ENCODE measurements at regions of chr10 and their contacts with region 1.

Region 1: DNA sequence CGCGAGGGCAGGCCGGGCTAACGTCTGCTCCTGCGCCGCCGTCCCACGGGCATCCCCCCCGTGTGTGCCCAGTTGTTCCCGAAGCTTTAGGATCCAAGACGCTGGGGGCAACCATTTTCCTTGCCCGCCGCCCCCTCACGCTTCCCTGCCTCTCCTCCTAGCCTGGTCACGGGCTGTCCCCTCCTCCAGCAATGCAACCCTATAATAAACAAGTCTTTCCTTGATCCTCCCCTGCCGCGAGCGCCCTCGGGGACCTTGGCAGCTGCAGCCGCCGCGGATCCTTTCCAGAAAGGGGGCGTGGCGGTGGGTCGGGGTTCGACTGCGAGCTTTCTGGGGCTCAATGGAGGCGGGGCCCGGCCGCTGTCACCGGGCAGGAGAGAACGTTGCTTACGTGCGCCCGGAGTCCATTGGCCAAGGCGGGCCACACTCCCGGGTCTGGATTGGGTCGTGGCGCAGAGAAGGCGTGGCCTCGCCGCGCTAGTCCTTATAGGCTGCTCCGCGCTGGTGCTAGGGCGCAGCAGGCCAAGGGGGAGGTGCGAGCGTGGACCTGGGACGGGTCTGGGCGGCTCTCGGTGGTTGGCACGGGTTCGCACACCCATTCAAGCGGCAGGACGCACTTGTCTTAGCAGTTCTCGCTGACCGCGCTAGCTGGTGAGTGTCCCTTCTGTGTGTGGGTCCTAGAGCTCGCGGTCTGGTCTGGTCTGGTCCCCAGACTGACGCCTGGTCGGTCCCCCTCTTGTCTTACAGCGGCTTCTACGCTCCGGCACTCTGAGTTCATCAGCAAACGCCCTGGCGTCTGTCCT is at the start of gene DDIT4:
- DNase-seq: peak; percentile 99
- H3K4me3 Mint-ChIP-seq: peak within 1 kb of the TSS; percentile 100
- H3K27ac Mint-ChIP-seq: peak within 1 kb of the TSS; percentile 96
- H3K4me1 Mint-ChIP-seq: peaks cover 58% of the 10 kb centered on the region
- H3K27me3 Mint-ChIP-seq: no peaks in the 10 kb centered on the region
- total RNA-seq, gene DDIT4: 475 to 481 TPM

Region 2: GRCh38 chr10:72175166-72175565 is 98.4 kb before region 1 on chr10:
- CTCF ChIA-PET with region 1: no interaction called
- POLR2A ChIA-PET with region 1: no interaction called
- DNase-seq: no peak
- H3K4me3 Mint-ChIP-seq: no peak overlapping the region
- H3K27ac Mint-ChIP-seq: no peak overlapping the region
- H3K4me1 Mint-ChIP-seq: peaks cover 12% of the 10 kb centered on the region
- H3K27me3 Mint-ChIP-seq: no peaks in the 10 kb centered on the region

Region 3: DNA sequence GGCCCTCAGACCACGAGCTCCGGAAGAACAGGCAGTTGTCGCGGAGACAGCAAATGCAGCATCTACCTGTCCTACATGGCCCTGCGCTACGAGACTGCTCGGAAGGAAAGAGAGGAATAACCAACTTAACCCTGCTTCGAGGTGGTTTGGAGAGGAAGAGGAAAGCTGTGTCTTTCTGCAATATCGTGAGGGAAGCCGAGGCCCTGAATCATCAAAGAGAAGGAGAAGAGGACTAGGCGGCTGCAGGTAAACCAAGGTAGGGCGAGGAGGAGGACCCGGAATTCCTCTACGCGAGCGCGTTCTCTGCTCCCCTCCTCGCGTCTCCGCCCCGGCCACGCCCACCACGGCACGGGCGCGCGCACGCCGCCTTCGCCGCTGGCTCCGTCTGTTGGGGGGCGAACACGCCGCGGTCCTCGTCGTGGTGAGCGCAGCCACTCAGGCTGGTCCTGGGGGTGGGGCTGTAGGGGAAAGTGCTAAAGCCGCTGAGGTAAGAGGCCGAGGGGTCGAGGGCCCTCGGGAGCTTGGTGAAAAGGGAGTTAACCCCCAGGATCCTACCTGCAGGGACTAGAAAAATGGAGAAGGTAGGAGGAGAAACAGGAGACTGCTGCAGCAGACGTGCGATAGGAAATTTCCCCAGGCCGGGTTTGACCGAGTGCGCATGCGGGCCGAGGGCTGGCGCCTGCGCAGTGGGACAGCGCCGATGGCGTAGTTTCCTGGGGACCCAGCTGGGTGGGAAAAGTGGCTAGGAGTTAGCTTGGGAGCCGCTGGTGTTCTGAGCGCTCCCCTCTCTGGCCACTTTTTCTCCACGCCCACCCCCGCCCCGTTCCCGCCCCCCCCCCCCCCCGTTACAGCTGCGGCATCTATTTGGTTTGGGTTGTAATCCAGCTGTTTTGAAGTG is 57.7 kb before region 1 on chr10 and contains the starts of genes ANAPC16 and ASCC1:
- CTCF ChIA-PET with region 1: interaction called, 5 read pairs
- POLR2A ChIA-PET with region 1: interaction called, 37 read pairs
- DNase-seq: peak; percentile 94
- H3K4me3 Mint-ChIP-seq: peak within 1 kb of the TSS; percentile 98
- H3K27ac Mint-ChIP-seq: peak within 1 kb of the TSS; percentile 99
- H3K4me1 Mint-ChIP-seq: peaks cover 61% of the 10 kb centered on the region
- H3K27me3 Mint-ChIP-seq: no peaks in the 10 kb centered on the region
- total RNA-seq, gene ANAPC16: 94.2 to 101 TPM
- total RNA-seq, gene ASCC1: 35.5 to 36.2 TPM

Region 4: DNA sequence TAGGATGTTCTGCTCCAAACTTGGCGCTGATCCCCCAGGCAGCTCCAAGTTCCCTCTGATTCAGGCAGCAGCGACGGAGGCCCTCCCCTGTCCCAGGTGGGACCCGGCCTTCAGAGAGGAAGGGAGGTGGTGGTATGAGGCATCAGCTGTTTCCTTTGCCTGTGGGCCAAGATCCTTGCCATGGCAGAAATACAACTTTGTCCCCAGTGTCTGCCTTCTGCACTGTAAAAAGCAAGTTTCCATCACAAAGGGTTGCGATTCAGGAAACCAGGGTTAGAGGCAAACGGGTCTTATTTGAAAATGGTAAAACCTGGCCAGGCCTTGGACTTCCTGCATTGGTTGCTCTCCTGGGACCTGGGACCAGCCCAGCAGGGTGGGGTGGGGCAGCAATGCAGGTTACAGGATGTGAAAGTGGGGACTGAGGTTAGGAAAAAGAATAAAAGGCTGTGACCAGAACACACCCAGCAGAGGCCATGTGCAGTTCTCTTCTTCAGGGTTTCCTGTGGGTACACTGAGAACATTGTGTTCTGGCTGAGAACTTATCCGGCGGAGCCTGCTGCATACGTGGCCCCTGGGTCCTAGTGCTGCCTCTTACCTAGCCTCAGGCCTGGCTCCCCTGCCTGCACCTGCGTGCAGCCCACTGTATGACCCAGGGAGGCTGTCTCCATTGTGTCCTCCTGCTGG is 25.0 kb before region 1 on chr10:
- CTCF ChIA-PET with region 1: interaction called, 33 read pairs
- POLR2A ChIA-PET with region 1: interaction called, 58 read pairs
- DNase-seq: peak; percentile 86
- H3K4me3 Mint-ChIP-seq: peak overlapping the region; percentile 73
- H3K27ac Mint-ChIP-seq: peak overlapping the region; percentile 96
- H3K4me1 Mint-ChIP-seq: peaks cover 78% of the 10 kb centered on the region
- H3K27me3 Mint-ChIP-seq: no peaks in the 10 kb centered on the region

Region 5: DNA sequence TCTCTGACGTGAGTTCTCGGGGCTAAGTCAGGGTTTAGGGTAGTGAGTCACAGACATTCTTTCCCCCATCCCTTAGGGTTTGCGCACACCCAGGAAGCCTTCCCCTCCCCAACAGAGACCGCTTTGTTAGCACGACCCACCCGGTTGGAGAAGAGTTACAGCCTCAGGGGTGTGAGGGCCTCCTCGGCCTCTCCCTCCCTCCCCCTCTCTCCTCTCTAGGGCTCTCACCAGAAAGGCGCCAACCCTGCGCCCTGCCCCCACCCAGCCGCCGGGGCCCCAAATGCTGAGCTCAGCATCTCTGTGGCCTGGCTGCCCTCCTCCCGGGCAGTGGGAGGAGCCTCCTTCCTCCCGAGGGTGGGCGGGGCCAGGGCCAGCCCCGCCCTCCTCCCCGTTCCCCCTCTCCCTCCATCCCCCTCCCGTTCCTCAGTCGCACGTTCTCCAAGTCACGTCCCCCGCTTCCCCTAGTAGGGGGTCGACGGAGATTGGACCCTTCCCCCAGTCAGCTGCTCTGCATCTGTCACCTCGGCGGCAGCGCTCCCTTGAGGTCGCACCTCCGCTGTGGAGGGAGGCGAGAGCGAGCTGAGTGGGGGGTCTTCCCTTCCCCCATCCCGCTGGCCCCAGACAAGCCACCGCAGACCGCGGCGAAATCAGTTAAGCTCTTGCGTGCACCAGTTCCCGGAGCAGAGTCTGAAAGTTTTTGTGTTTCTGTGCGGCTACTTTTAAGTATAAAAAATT is 12.9 kb before region 1 on chr10:
- CTCF ChIA-PET with region 1: interaction called, 33 read pairs
- POLR2A ChIA-PET with region 1: interaction called, 145 read pairs
- DNase-seq: peak; percentile 95
- H3K4me3 Mint-ChIP-seq: peak overlapping the region; percentile 79
- H3K27ac Mint-ChIP-seq: peak overlapping the region; percentile 98
- H3K4me1 Mint-ChIP-seq: peaks cover 65% of the 10 kb centered on the region
- H3K27me3 Mint-ChIP-seq: no peaks in the 10 kb centered on the region

Region 6: DNA sequence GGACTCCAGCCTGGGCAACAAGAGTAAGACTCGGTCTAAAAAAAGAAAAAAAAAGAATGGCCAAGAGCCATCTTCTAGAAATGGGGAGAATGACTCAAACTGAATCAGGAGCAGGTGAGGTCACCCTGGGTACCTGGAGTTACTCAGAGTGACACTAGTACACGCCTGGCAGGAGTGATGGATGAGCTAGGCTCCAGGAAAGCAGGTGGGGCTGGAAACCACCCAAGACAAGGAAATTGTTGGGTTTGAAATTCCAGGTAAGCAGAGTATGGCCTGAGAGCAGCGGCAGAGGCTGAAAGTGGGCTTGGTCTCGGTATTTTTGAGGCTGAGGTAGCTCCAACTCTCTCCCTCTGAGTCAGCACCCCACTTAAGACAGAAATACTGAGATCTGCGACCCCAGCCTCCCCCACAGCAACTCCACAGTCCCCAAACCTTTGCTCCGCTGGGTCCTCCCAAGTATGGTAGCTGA is 18.6 kb after region 1 on chr10:
- CTCF ChIA-PET with region 1: interaction called, 56 read pairs
- POLR2A ChIA-PET with region 1: interaction called, 79 read pairs
- DNase-seq: peak; percentile 60
- H3K4me3 Mint-ChIP-seq: peak overlapping the region; percentile 31
- H3K27ac Mint-ChIP-seq: peak overlapping the region; percentile 90
- H3K4me1 Mint-ChIP-seq: peaks cover 67% of the 10 kb centered on the region
- H3K27me3 Mint-ChIP-seq: no peaks in the 10 kb centered on the region

Region 7: DNA sequence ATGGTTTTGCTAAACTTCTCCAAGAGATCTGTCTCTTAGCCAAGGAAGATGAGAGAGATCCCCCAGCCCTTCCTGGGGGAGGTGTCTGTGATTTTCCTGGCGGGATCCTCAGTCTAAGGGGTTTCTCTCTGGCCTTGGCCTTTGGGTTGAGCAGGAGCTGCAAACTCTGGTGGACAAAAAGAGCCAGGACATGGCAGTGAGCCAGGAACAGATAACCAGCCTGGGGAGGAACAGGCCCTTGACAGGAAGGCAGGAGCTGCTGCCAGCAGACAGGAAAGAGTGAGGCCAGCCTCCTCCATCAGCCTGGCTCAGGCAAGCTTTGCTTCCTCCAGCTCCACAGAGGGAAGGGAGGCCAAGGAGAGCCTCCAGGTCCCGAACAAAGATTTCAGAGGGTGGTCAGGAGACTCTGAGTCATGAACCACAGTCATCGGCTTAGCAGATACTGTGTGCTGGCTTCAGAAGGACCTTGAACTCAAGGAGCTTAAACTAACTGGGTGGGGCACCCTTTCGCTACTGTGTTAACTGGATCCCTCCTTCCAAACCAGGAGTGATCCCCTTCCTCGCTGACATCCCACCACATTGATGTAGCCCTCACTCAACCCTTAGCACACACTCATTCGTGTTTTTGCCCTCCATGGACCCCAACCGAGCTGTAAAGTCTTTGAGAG is 34.8 kb after region 1 on chr10:
- CTCF ChIA-PET with region 1: interaction called, 7 read pairs
- POLR2A ChIA-PET with region 1: interaction called, 39 read pairs
- DNase-seq: peak; percentile 55
- H3K4me3 Mint-ChIP-seq: no peak overlapping the region
- H3K27ac Mint-ChIP-seq: peak overlapping the region; percentile 76
- H3K4me1 Mint-ChIP-seq: peaks cover 67% of the 10 kb centered on the region
- H3K27me3 Mint-ChIP-seq: no peaks in the 10 kb centered on the region

Region 8: DNA sequence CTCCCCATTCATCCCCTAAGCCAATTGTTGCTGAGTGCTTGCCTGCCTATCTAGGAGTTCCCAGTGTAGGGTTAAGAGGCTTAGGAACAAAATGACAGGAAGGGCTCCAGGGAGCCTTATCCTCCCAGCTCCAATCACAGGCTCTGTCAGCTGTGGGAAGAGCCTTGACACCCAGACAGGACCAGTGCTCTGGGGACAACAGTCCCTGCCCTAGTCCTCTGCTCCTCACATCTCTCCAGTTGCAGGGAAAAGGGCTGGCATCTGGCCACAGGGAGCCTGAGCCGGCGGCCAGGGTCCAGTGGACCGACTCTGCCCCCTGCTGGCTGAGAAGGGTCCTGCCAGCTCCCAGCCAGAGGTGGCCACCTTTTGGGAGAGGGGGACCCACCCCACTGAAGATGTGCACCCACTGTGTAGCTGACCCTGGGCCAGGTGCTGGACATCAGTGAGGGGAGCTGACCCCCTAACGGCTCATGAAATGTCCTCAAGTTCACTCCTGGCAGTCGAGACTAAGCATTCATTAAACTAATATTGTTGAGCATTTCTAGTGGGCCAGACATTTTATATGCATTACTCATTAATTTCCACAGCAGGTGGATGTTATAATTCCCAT is 63.5 kb after region 1 on chr10:
- CTCF ChIA-PET with region 1: interaction called, 89 read pairs
- POLR2A ChIA-PET with region 1: interaction called, 225 read pairs
- DNase-seq: peak; percentile 71
- H3K4me3 Mint-ChIP-seq: no peak overlapping the region
- H3K27ac Mint-ChIP-seq: peak overlapping the region; percentile 64
- H3K4me1 Mint-ChIP-seq: peaks cover 66% of the 10 kb centered on the region
- H3K27me3 Mint-ChIP-seq: no peaks in the 10 kb centered on the region

Region 9: DNA sequence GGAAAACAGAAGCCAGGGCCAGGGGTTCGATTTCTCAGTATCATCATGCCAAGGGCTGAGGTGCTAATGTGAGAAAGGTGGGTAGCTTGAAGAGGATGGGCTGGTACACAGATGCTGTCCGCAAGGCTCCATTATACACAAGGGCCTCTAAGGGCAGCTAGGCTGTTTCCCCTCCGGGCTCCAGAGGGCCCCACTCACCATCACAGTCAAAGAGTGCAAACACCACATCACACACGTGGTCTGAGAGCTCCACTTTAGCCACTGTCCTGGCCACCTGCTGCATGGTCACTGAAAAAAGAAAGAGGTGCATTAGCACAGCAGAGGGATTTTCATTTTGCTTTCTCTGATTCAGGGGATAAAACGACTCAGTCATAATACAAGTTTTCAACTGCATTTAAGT is 102.0 kb after region 1 on chr10:
- CTCF ChIA-PET with region 1: no interaction called
- POLR2A ChIA-PET with region 1: no interaction called
- DNase-seq: peak; percentile 14
- H3K4me3 Mint-ChIP-seq: no peak overlapping the region
- H3K27ac Mint-ChIP-seq: no peak overlapping the region
- H3K4me1 Mint-ChIP-seq: peaks cover 15% of the 10 kb centered on the region
- H3K27me3 Mint-ChIP-seq: no peaks in the 10 kb centered on the region

Measured in activated CD4-positive, alpha-beta memory T cell treated with anti-CD3 and anti-CD28 coated beads, Interleukin-2, amount 10 ng/mL, durations not matched to agents 7 days and 5 days (primary cell).